B cell (primary cell): ENCODE measurements at regions of chr1 and their contacts with region 1.

Region 1: GRCh38 chr1:18926315-18927081 is 24.1 kb upstream of the ALDH4A1 start:
- DNase-seq: peak; percentile 72
- ATAC-seq: peak; percentile 84
- H3K4me3 ChIP-seq: peak overlapping the region; percentile 11 to 51 (median 38)
- H3K4me3 Mint-ChIP-seq: peak overlapping the region; percentile 68
- H3K27ac ChIP-seq: peak overlapping the region; percentile 73 to 85
- H3K27ac Mint-ChIP-seq: peak overlapping the region; percentile 97
- H3K4me1 ChIP-seq: peaks cover 53 to 54% of the 10 kb centered on the region in 2 donors
- H3K4me1 Mint-ChIP-seq: peaks cover 71% of the 10 kb centered on the region
- H3K27me3 ChIP-seq: no peaks in the 10 kb centered on the region
- H3K27me3 Mint-ChIP-seq: no peaks in the 10 kb centered on the region
- CTCF ChIP-seq: peak; percentile 19

Region 2: DNA sequence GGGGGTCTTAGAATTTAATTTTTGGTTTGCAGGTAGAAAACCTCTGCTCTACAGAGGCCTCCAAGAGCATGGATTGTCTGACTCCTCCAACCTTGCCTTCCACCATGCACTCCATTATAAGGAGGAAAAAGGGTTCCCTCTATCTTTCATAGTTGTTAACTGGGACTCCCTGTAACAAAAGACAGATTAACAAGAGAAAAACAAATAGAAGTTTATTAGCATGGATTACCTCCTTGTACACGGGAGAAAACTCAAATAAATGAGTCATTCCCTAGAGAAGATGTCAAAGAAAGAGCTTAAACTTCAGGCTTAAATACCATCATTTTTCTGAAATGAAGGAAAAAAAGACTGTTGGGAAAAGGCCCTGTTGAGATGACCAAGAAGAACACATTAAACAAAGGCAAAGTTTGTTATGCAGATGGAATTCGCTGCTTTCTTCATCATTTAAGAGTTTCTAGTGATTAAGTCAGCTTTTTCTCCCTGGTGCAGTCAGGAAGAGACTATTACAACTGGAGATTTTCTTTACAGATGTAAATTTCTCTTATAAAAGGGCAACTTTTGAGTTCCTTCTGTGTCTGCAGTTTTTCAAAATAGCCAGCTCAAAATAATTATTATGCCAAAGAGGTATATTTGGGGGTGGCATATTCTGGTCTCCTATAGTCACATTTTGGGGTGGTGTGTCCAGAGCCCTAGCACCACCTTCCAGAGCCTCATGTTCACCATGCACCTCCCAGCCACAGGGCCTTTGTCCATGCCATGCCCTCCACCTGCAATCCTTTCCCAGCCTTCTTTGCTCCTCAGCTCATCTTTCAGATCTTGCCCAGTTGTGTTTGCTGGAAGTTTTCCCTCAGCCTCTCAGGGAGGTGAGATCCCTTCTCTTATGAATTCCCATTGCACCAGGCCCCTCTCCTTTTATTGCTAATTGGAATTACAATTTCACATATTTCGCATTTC is 508.9 kb before region 1 on chr1:
- CTCF ChIA-PET with region 1: no interaction called
- POLR2A ChIA-PET with region 1: no interaction called
- intact Hi-C with region 1: no loop called
- DNase-seq: no peak
- ATAC-seq: no peak
- H3K4me3 ChIP-seq: no peak overlapping the region
- H3K4me3 Mint-ChIP-seq: no peak overlapping the region
- H3K27ac ChIP-seq: no peak overlapping the region
- H3K27ac Mint-ChIP-seq: no peak overlapping the region
- H3K4me1 ChIP-seq: no peaks in the 10 kb centered on the region
- H3K4me1 Mint-ChIP-seq: no peaks in the 10 kb centered on the region
- H3K27me3 ChIP-seq: no peaks in the 10 kb centered on the region
- H3K27me3 Mint-ChIP-seq: peaks cover 20% of the 10 kb centered on the region
- CTCF ChIP-seq: no peak

Region 3: DNA sequence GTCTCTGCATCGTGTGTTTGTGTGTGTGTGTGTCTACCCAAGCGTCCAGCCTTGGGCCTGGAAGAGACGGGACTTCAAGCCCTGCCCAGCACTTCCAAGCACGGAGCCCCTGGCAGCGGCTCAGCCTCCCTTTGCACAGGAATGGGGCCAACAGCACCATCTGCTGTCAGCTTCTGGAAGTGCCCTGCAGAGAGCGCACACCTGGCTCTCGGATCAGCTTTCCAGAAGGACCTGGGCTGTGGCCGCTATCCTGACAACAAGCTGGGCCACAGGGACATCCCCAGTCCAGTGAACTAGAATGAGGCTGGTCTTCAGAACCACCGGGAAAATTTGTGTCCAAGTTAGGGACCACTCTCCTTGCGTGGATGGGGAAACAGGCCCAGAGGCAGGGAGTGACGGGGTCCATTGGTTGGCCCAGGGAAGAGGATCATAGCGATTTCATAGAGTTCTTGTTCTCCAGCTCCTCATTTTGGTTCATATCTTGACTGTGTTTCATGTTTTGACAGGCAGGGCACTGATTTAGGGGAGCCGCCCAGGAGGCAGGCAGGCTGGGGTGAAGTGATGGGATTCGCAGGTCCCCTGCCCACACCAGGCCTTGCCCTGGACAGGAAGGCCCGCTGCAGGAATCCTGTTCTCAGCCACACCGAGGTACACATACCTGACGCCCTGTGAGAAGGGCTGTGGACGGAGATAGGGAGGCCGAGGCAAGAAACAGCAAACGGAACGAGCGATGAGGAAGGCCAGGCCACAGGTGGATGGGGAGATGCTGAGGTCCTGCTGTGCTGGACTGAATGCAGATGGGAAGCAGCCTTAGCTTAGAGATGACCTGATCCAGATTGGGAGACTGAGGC is 105.5 kb before region 1 on chr1:
- CTCF ChIA-PET with region 1: no interaction called
- POLR2A ChIA-PET with region 1: no interaction called
- intact Hi-C with region 1: no loop called
- DNase-seq: peak; percentile 31
- ATAC-seq: no peak
- H3K4me3 ChIP-seq: no peak overlapping the region
- H3K4me3 Mint-ChIP-seq: no peak overlapping the region
- H3K27ac ChIP-seq: no peak overlapping the region
- H3K27ac Mint-ChIP-seq: no peak overlapping the region
- H3K4me1 ChIP-seq: no peaks in the 10 kb centered on the region
- H3K4me1 Mint-ChIP-seq: no peaks in the 10 kb centered on the region
- H3K27me3 ChIP-seq: peaks cover 0 to 12% (median 2%) of the 10 kb centered on the region in 4 experiments
- H3K27me3 Mint-ChIP-seq: peaks cover 53% of the 10 kb centered on the region
- CTCF ChIP-seq: peak; percentile 72

Region 4: DNA sequence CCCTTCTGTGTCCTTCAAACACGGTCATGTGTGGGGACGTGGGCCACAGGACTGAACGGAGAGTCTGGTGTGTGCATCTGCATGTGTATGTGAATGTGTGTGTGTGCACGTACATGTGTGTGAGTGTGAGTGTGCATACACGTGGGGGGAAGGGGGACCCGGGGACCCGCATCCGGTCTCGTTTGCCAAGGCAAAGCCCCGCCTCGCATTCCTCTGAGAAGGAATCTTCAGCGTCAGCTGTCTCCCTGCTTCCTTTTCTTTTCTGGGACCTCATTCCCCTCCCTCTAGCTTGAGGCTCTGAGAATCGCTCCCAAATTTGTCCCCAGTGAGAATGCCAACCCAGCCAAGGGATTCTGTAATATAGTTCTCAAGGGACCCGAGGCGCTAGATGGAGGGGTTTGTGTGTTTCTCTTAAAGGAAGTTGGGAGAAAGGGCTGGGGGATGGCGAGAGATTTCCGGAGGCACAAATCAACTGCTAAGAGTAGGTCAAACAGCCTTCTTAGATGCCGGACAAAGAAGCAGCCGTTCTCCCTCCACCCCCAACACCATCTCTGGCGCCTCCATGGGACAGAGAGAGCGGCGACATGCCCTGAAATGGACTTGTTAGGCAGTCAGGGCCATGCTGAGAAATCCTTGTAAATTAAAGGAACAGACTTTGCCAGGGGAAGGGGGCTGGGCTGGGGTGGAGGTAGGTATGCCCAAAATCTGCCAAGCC is 23.3 kb after region 1 on chr1:
- CTCF ChIA-PET with region 1: interaction called, 127 read pairs
- POLR2A ChIA-PET with region 1: interaction called, 37 read pairs
- intact Hi-C with region 1: loop called (anchors 1 kb)
- DNase-seq: peak; percentile 56
- ATAC-seq: no peak
- H3K4me3 ChIP-seq: peak overlapping the region; percentile 23 to 64 (median 47)
- H3K4me3 Mint-ChIP-seq: peak overlapping the region; percentile 85
- H3K27ac ChIP-seq: peak overlapping the region; percentile 97 to 100
- H3K27ac Mint-ChIP-seq: peak overlapping the region; percentile 98
- H3K4me1 ChIP-seq: peaks cover 91 to 97% of the 10 kb centered on the region in 2 donors
- H3K4me1 Mint-ChIP-seq: peaks cover 94% of the 10 kb centered on the region
- H3K27me3 ChIP-seq: no peaks in the 10 kb centered on the region
- H3K27me3 Mint-ChIP-seq: no peaks in the 10 kb centered on the region
- CTCF ChIP-seq: no peak

Region 5: GRCh38 chr1:18956369-18957135 is 30.1 kb after region 1 on chr1 and contains the start of gene IFFO2:
- CTCF ChIA-PET with region 1: interaction called, 127 read pairs
- POLR2A ChIA-PET with region 1: interaction called, 37 read pairs
- intact Hi-C with region 1: loop called (anchors 1 kb)
- DNase-seq: peak; percentile 97
- ATAC-seq: peak; percentile 88
- H3K4me3 ChIP-seq: peak within 1 kb of the TSS; percentile 33 to 73 (median 64)
- H3K4me3 Mint-ChIP-seq: peak within 1 kb of the TSS; percentile 90
- H3K27ac ChIP-seq: peak within 1 kb of the TSS in 1 of 2 donors; percentile 13
- H3K27ac Mint-ChIP-seq: peak within 1 kb of the TSS; percentile 78
- H3K4me1 ChIP-seq: peaks cover 50 to 53% of the 10 kb centered on the region in 2 donors
- H3K4me1 Mint-ChIP-seq: peaks cover 46% of the 10 kb centered on the region
- H3K27me3 ChIP-seq: peaks cover 0 to 10% (median 4%) of the 10 kb centered on the region in 4 experiments
- H3K27me3 Mint-ChIP-seq: peaks cover 9% of the 10 kb centered on the region
- CTCF ChIP-seq: no peak
- total RNA-seq, gene IFFO2: 15.4 and 16.8 TPM in 2 replicates